Pancreas (tissue), 10 donors: ENCODE measurements at regions of chr5 and their contacts with region 1.

Region 1: GRCh38 chr5:30209752-30210151 is 983.7 kb upstream of the CDH6 start:
- DNase-seq: no peak
- ATAC-seq: no peak
- H3K4me3 ChIP-seq: no peak overlapping the region
- H3K27ac ChIP-seq: no peak overlapping the region
- H3K4me1 ChIP-seq: no peaks in the 10 kb centered on the region
- H3K27me3 ChIP-seq: no peaks in the 10 kb centered on the region
- CTCF ChIP-seq: no peak

Region 2: GRCh38 chr5:29796013-29796412 is 413.7 kb before region 1 on chr5:
- intact Hi-C with region 1: no loop called
- DNase-seq: no peak
- ATAC-seq: no peak
- H3K4me3 ChIP-seq: no peak overlapping the region
- H3K27ac ChIP-seq: no peak overlapping the region
- H3K4me1 ChIP-seq: no peaks in the 10 kb centered on the region
- H3K27me3 ChIP-seq: no peaks in the 10 kb centered on the region
- CTCF ChIP-seq: no peak

Region 3: GRCh38 chr5:29930316-29930715 is 279.4 kb before region 1 on chr5:
- intact Hi-C with region 1: no loop called
- DNase-seq: no peak
- ATAC-seq: no peak
- H3K4me3 ChIP-seq: no peak overlapping the region
- H3K27ac ChIP-seq: no peak overlapping the region
- H3K4me1 ChIP-seq: no peaks in the 10 kb centered on the region
- H3K27me3 ChIP-seq: no peaks in the 10 kb centered on the region
- CTCF ChIP-seq: no peak

Region 4: GRCh38 chr5:30279237-30279636 is 69.5 kb after region 1 on chr5:
- intact Hi-C with region 1: loop called in 1 of 3 experiments (anchors 10 kb)
- DNase-seq: no peak
- ATAC-seq: no peak
- H3K4me3 ChIP-seq: no peak overlapping the region
- H3K27ac ChIP-seq: no peak overlapping the region
- H3K4me1 ChIP-seq: no peaks in the 10 kb centered on the region
- H3K27me3 ChIP-seq: no peaks in the 10 kb centered on the region
- CTCF ChIP-seq: no peak